CD8-positive, alpha-beta memory T cell (primary cell): ENCODE measurements at regions of chr3 and their contacts with region 1.

Region 1: DNA sequence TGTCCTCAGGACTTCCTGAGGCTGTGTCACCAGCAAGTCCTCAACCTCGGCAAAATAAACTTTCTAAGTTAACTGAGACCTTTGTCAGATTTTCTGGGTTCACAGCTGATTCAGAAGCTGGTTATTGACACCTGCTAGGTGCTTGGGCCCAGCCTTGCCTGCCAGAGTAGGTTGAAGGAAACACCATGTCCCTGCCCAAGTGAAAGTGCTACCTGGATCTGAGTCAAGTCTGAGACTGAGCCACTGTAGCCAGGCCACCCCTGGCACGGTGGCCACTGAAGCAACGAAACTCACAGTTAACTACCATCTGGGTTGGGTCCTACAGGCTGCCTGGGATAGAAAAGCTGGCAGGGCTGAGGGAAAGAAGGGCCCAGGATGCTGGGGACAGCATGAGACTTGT is 8.2 kb downstream of the HYAL2 start:
- DNase-seq: no peak
- H3K4me3 ChIP-seq: no peak overlapping the region
- H3K4me3 Mint-ChIP-seq: peak overlapping the region in 1 of 7 donors; percentile 50
- H3K27ac ChIP-seq: no peak overlapping the region
- H3K27ac Mint-ChIP-seq: peak overlapping the region in 3 of 8 donors; percentile 12 to 52 (median 23)
- H3K4me1 ChIP-seq: peaks cover 16% of the 10 kb centered on the region
- H3K4me1 Mint-ChIP-seq: peaks cover 28 to 49% (median 44%) of the 10 kb centered on the region in 3 donors
- H3K27me3 ChIP-seq: no peaks in the 10 kb centered on the region
- H3K27me3 Mint-ChIP-seq: peaks cover 0 to 2% of the 10 kb centered on the region in 2 donors

Region 2: GRCh38 chr3:50327943-50328691 is 13.8 kb after region 1 on chr3 and contains the start of gene TUSC2:
- CTCF ChIA-PET with region 1: interaction called, 13 read pairs
- POLR2A ChIA-PET with region 1: interaction called, 8 read pairs
- DNase-seq: peak; percentile 92 to 96 (median 93)
- H3K4me3 ChIP-seq: peak within 1 kb of the TSS; percentile 70
- H3K4me3 Mint-ChIP-seq: peak within 1 kb of the TSS; percentile 82 to 97 (median 91)
- H3K27ac ChIP-seq: peak within 1 kb of the TSS; percentile 71
- H3K27ac Mint-ChIP-seq: peak within 1 kb of the TSS; percentile 77 to 96 (median 94)
- H3K4me1 ChIP-seq: peaks cover 19% of the 10 kb centered on the region
- H3K4me1 Mint-ChIP-seq: peaks cover 26 to 47% (median 31%) of the 10 kb centered on the region in 3 donors
- H3K27me3 ChIP-seq: no peaks in the 10 kb centered on the region
- H3K27me3 Mint-ChIP-seq: peaks cover 0 to 1% of the 10 kb centered on the region in 2 donors
- total RNA-seq, gene TUSC2: 31.4 to 36.6 TPM